ENCODE measurements at regions of chr4 and their contacts with region 1.

Region 1: GRCh38 chr4:41281038-41281634 is 24.4 kb downstream of the UCHL1 start:
- DNase-seq: peak; percentile 9 to 21
- ATAC-seq: peak; percentile 99 to 100
- H3K4me3 ChIP-seq: no peak overlapping the region
- H3K27ac ChIP-seq: no peak overlapping the region
- H3K4me1 ChIP-seq: no peaks in the 10 kb centered on the region
- H3K27me3 ChIP-seq: no peaks in the 10 kb centered on the region
- CTCF ChIP-seq: peak; percentile 84 to 91 (median 88)
- POLR2A ChIP-seq: no peak

Region 2: GRCh38 chr4:41339812-41340809 is 59.0 kb after region 1 on chr4:
- in situ Hi-C with region 1: loop called in 1 of 4 experiments (anchors 10 kb)
- intact Hi-C with region 1: no loop called
- DNase-seq: no peak
- ATAC-seq: peak in 1 of 2 donors; percentile 39
- H3K4me3 ChIP-seq: no peak overlapping the region
- H3K27ac ChIP-seq: no peak overlapping the region
- H3K4me1 ChIP-seq: no peaks in the 10 kb centered on the region
- H3K27me3 ChIP-seq: no peaks in the 10 kb centered on the region
- CTCF ChIP-seq: no peak
- POLR2A ChIP-seq: no peak

Region 3: DNA sequence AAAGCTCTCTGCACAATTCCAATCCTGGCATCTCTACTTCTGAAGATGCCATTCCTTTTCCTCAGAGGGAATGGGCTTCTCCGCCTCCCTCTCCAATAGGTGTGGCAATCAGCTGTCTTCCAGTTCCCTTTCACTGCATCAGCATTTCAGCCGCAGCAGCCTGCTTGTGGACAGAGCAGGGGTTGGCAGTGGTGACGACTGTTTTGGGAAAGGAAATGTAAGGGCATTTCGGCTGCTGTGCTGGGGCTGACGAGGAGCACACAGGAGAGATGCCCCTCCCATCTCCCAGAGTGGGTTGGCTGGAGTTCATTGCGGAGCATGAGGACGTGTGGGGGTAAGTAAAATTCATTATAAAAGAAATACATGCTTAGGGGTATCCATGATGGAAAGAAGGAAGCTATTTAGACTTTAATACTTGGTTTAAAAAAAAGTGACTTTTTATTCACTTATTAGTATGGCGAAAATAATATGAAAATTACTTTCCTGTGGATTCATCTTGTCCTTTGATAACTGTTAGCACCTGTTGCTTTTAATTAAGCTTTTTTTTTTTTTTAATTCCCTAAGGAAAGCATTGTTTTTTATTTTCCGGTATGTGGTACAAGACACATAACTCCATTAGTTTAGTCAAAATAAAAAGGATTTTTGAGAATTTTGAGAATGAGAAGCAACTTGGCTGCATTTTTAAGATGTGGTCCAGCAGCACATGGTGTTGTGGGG is 257.0 kb after region 1 on chr4 and contains the start of gene LIMCH1:
- in situ Hi-C with region 1: no loop called
- intact Hi-C with region 1: loop called (anchors 5 kb)
- DNase-seq: peak; percentile 78 to 87
- ATAC-seq: peak; percentile 72 to 73
- H3K4me3 ChIP-seq: peak within 1 kb of the TSS; percentile 48 to 52 (median 49)
- H3K27ac ChIP-seq: peak within 1 kb of the TSS; percentile 85 to 94 (median 91)
- H3K4me1 ChIP-seq: peaks cover 58 to 68% of the 10 kb centered on the region in 2 donors
- H3K27me3 ChIP-seq: no peaks in the 10 kb centered on the region
- CTCF ChIP-seq: peak in 1 of 5 experiments; percentile 7
- POLR2A ChIP-seq: peak; percentile 28 to 38
- total RNA-seq, gene LIMCH1: 36.2 to 71.4 (median 52.1) TPM

Region 4: DNA sequence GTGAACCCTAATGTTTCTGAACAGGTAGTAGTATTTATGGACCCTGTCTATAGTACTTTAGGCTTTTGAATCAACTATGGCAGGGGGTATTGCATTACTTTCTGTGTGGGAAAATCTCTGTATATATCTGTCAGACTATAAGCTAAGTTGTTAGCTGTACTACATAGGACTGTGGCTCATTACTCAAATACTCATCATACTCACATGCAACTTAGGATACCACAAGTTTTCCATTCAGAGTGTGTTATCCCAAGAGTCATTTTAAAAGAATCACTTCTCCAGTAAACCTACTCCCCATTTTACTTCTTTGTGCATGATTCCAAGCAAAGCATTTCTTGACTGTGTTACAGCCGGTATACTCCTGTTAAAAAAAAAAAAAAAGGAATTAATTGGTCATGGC is 371.8 kb after region 1 on chr4:
- in situ Hi-C with region 1: loop called in 3 of 4 experiments (anchors 5 kb)
- intact Hi-C with region 1: no loop called
- DNase-seq: no peak
- ATAC-seq: no peak
- H3K4me3 ChIP-seq: no peak overlapping the region
- H3K27ac ChIP-seq: no peak overlapping the region
- H3K4me1 ChIP-seq: peaks cover 25 to 31% of the 10 kb centered on the region in 2 donors
- H3K27me3 ChIP-seq: no peaks in the 10 kb centered on the region
- CTCF ChIP-seq: no peak
- POLR2A ChIP-seq: no peak

Region 5: DNA sequence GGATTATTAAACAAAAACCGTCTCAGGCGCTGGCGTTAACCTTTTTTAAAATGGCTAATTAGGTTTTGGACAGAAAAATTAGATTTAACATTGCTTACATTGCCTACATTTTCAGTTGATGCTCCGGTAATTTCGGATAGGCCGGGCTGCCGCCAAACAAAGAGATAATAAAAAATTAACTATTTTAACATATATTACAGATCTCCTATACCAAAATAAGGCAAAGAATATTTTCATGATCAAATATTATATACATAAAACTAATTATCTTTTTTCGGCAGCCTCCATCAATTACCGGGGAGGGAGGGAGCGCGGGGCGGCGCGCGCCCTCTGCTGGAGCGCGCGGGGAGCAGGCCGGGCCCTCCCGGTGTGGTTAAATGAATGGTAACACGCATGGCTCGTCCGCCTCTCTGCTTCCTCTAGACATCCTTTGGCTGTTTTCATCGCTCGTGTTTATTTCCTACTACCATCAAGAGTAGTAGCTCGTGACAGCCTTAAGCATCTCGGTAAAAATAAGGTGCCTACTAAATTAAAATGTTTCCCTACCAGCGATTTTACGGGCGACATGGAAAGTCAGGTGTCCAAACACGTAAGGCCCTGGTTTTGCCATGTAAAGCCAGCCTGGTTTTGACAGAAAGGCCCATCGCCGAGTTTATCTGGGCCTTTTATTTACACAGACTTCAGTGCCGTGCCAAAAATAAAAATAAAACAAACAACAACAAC is 601.6 kb after region 1 on chr4:
- in situ Hi-C with region 1: loop called (anchors 10 to 25 kb)
- intact Hi-C with region 1: loop called (anchors 10 kb)
- DNase-seq: no peak
- ATAC-seq: peak in 1 of 2 donors; percentile 58
- H3K4me3 ChIP-seq: peak overlapping the region; percentile 49 to 69 (median 50)
- H3K27ac ChIP-seq: no peak overlapping the region
- H3K4me1 ChIP-seq: peaks cover 19 to 27% of the 10 kb centered on the region in 2 donors
- H3K27me3 ChIP-seq: peaks cover 49 to 52% (median 49%) of the 10 kb centered on the region in 3 donors
- CTCF ChIP-seq: peak; percentile 53 to 94 (median 64)
- POLR2A ChIP-seq: no peak

Measured in gastrocnemius medialis (tissue), 4 donors.